Left colon (tissue), 2 donors: ENCODE measurements at regions of chr12 and their contacts with region 1.

Region 1: DNA sequence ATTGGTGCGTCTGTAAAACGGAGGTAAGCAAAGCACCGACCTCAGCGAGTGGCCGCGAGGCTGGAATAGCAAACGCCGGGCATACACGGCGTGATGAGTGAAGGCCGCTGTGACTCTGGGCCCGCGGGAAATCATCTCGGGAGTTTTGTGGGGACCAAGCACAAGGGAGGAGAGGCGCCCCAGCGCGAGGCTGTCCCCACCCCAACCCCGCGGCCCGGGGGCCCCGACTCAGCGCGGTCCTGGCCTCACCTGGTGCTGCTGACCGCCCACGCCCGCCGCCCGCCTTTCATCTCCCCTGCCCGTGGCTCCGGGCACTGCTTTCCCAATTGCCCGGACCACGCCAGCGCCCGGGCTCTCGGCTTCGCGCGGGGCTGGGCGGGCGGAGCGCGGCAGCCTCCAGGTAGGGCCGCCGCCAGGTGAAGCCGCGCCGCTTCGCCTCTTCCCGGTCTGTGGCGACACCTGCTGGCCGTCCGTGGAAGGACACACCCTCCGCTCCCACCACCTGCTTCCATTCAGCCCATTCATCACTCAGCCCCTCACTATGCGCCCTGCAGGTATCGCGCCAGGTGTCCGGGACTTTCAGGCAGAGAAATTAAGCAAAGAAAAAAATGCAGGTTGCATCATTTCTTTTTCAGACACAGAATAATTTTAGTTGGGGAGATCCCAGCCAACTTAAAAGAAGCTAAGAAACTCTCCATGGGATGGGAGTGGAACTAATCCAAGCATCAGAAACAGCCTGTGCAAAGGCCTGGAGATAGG is 360.4 kb downstream of the MED13L start:
- DNase-seq: peak; percentile 32 to 80
- ATAC-seq: peak; percentile 97

Region 2: DNA sequence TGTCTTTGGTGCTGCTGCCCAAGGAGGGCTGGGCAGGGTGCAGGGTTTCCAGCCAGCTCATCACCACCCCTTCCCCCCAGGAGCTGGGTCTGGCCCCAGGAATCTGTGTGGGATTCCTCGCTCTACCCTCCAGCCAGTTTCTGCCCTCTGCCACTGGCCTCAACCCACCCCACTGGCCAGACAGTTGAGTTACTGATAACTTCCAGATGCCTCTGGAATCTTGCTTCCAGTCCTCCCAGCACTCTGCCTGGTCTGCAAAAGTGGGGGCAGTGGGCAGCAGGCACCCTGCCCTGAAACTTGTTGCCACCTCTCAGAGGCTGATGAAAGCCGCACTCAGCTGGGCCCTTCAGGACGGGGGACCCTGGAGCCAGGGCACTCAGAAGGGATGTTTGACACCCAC is 1213.0 kb before region 1 on chr12:
- intact Hi-C with region 1: no loop called
- DNase-seq: no peak
- ATAC-seq: no peak

Region 3: DNA sequence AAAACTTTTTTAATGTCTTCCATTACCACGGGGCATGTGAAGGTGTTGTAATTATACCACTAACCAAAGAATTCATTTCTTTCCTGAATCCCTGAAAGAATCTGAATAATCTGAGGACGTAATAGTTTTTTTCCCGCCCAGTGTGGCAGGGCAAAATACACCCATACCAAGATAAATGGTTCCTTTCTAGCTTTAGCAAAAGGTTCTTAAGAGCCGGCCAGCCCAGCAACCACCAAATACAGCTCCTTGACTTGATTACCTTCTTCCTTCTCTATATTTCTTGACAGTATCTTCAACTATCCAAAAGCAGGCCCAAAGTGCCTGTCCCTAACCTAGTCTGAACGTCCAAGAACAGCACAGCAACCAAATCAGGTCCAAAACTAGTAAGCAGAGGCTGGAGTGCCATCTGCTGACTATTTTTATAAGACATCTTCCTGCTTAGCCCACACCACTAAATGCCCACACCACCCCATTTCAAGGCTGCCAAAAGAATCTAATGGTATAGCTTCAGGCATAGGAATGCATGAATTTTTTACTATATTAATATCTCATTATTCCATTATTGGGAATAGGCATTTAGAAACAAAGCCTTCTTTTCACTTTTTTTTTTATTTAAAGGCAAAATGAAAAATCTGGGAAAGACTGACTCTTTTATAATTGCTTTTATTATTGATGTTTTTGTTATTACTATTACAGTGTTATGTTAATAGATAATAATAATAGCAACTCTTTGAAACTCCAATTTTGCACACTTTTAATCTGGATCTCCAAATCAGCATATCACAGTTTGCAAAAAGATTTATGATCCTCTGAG is 164.0 kb before region 1 on chr12:
- intact Hi-C with region 1: loop called in 1 of 2 experiments (anchors 10 kb)
- DNase-seq: no peak
- ATAC-seq: peak; percentile 91